Naive thymus-derived CD4-positive, alpha-beta T cell (primary cell): ENCODE measurements at regions of chr12 and their contacts with region 1.

Region 1: DNA sequence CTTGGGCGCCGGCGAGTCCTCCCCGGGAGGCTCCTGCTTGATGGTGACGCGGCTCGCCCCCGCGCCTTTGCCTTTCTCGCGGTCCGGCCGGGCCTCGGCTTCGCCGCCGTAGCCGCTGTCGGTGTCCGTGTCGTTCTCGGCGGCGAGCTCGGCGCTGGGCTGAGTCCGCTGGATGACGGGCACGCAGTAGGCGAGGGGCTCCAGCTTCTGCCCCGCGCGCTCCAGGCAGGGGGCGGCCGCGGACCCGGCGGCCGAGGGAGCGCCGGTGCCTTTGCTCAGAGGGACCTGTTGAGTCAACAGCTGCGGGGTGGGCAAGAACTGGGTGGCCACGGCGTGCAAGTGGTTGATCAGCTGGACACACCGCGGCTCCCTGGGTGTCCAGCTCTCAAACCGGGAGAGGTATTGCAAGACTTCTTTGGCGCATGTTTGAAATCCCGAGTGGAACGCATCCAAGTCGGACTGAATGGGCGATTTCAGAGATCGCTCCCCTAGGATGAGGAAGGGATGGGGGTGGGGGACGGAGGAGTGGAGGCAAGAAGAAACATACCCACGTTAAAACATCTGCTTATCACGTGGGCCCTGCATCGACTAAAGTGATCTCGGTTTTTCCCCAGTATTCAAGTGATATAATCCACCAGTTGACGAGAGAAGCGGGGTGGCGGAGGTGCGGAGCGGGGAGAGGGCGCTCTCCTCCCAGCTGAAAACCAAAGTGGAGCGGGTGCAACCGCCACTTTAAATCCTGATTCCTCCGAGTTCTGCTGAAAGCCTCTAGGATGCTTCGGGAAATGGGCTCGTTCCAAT is 2.0 kb downstream of the BHLHE41 start:
- DNase-seq: peak in 7 of 9 donors; percentile 16 to 51 (median 22)
- ATAC-seq: peak; percentile 44
- H3K4me3 ChIP-seq: peak overlapping the region; percentile 39
- H3K4me3 Mint-ChIP-seq: peak overlapping the region; percentile 80 to 91 (median 88)
- H3K27ac ChIP-seq: no peak overlapping the region
- H3K27ac Mint-ChIP-seq: peak overlapping the region in 3 of 9 donors; percentile 46 to 75 (median 58)
- H3K4me1 ChIP-seq: peaks cover 12 to 21% of the 10 kb centered on the region in 2 donors
- H3K4me1 Mint-ChIP-seq: peaks cover 22 to 49% (median 41%) of the 10 kb centered on the region in 7 donors
- H3K27me3 ChIP-seq: peaks cover 23 to 42% of the 10 kb centered on the region in 2 donors
- H3K27me3 Mint-ChIP-seq: peaks cover 67 to 86% (median 78%) of the 10 kb centered on the region in 5 donors

Region 2: DNA sequence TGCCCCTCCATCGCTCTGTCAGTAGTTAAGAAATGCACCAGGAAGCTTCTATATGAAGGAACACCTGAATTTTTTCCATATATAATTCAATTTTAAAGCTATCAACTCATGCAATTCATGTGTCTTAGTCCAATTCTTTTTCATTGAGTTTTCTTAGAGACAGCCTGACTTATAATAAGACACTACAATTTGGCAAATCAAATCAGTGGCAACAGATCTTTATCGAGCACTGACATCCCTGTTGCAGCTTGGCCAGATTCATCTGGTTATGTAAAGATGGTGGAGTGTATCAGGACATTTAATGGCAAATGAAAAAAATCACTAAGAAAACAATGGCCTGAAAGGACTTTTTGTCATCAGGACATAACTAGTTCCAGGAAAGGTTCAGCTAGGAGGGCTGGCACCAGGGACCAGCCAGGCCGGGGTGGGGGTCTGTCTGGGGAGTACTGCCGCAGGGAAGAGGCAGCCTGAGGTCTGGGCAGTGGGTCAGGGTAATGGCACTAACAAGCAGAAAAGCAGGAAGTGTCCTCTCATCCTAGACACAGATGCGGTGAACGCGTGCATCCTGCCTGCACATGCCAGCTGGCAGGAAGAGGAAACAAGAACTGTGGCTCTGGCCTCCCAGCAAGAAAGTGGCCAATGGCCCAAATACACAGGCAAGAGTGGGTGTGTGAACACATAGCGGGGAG is 469.2 kb before region 1 on chr12:
- CTCF ChIA-PET with region 1: no interaction called
- POLR2A ChIA-PET with region 1: no interaction called
- intact Hi-C with region 1: no loop called
- DNase-seq: no peak
- ATAC-seq: peak; percentile 40
- H3K4me3 ChIP-seq: no peak overlapping the region
- H3K4me3 Mint-ChIP-seq: peak overlapping the region in 1 of 10 donors; percentile 59
- H3K27ac ChIP-seq: no peak overlapping the region
- H3K27ac Mint-ChIP-seq: peak overlapping the region in 1 of 9 donors; percentile 47
- H3K4me1 ChIP-seq: no peaks in the 10 kb centered on the region
- H3K4me1 Mint-ChIP-seq: peaks cover 0 to 11% (median 8%) of the 10 kb centered on the region in 7 donors
- H3K27me3 ChIP-seq: no peaks in the 10 kb centered on the region
- H3K27me3 Mint-ChIP-seq: peaks cover 0 to 5% (median 0%) of the 10 kb centered on the region in 5 donors

Region 3: DNA sequence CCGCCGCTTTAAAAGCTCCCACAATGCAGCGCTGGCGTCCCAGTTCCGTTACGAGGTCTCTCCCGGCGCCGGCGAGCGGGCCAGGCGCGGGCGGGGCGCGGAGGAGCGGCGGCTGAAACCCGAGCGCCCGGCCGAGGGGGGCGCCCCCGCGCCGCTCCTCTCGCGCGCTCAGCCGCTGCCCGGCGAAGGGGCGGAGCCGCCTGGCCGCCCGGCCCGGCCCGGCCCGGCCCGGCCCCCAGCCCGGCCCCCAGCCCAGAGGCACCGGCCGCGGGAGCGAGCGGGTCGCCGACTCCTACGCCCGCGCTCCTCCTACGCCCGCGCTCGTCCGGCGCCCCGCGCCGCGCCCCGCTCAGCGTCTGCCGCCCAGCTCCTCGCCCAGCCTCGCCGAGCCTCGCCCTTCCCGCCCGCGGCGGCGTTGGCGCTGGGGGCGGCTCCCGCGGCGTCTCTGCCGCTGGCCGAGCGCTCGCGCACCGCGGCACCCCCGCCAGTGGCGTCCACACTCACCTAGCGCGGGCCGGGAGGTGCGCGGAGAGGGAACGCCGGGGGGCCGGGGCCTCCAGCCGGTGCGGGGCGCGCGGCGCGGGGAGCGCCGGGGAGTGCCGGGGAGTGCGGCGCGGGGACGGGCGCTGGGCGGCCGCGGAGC is 164.3 kb before region 1 on chr12 and contains the start of gene RASSF8:
- CTCF ChIA-PET with region 1: no interaction called
- POLR2A ChIA-PET with region 1: no interaction called
- intact Hi-C with region 1: loop called in 1 of 2 experiments (anchors 5 kb)
- DNase-seq: peak in 4 of 9 donors; percentile 1 to 48 (median 20)
- ATAC-seq: peak; percentile 65
- H3K4me3 ChIP-seq: peak within 1 kb of the TSS; percentile 40
- H3K4me3 Mint-ChIP-seq: peak within 1 kb of the TSS; percentile 75 to 90 (median 83)
- H3K27ac ChIP-seq: no peak within 1 kb of the TSS
- H3K27ac Mint-ChIP-seq: peak within 1 kb of the TSS in 1 of 9 donors; percentile 13
- H3K4me1 ChIP-seq: peaks cover 4 to 5% of the 10 kb centered on the region in 2 donors
- H3K4me1 Mint-ChIP-seq: peaks cover 12 to 27% (median 21%) of the 10 kb centered on the region in 7 donors
- H3K27me3 ChIP-seq: peaks cover 0 to 3% of the 10 kb centered on the region in 2 donors
- H3K27me3 Mint-ChIP-seq: peaks cover 67 to 83% (median 74%) of the 10 kb centered on the region in 5 donors
- total RNA-seq, gene RASSF8: 0.10 to 0.64 (median 0.27) TPM in 3 of 5 experiments, not detected in the others

Region 4: DNA sequence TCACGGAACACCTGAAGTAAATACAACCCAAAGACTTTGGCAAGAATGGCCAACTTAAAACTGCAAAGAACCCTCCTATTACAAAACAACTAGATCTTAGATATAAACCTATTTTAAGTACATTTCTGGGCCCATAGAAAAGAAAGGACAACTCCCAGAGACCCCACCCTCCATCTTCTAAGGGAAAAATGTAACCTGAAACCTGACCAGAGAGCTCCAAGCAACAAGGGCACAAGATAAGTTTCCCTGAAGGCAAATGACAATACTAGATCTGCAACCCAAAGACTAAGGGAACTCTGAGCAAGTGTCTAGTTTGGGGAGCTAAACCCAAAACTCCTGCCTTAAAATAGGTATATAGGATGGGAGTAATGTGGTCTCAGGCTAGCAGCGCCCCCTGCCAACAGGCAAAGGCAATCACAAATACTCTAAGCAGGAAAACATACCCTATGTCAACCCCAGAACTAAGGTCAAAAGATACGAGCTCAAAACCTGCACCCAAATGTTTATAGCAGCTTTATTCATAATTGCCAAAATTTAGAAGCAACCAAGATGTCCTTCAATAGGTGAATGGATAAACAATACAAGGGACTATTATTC is 491.2 kb after region 1 on chr12:
- CTCF ChIA-PET with region 1: no interaction called
- POLR2A ChIA-PET with region 1: no interaction called
- intact Hi-C with region 1: loop called in 1 of 2 experiments (anchors 1 kb)
- DNase-seq: peak in 1 of 9 donors; percentile 3
- ATAC-seq: no peak
- H3K4me3 ChIP-seq: no peak overlapping the region
- H3K4me3 Mint-ChIP-seq: no peak overlapping the region
- H3K27ac ChIP-seq: no peak overlapping the region
- H3K27ac Mint-ChIP-seq: no peak overlapping the region
- H3K4me1 ChIP-seq: no peaks in the 10 kb centered on the region
- H3K4me1 Mint-ChIP-seq: peaks cover 0 to 2% (median 0%) of the 10 kb centered on the region in 7 donors
- H3K27me3 ChIP-seq: no peaks in the 10 kb centered on the region
- H3K27me3 Mint-ChIP-seq: no peaks in the 10 kb centered on the region

Region 5: GRCh38 chr12:26651566-26652188 is 528.8 kb after region 1 on chr12:
- CTCF ChIA-PET with region 1: no interaction called
- POLR2A ChIA-PET with region 1: no interaction called
- intact Hi-C with region 1: loop called in 1 of 2 experiments (anchors 2 kb)
- DNase-seq: peak in 2 of 9 donors; percentile 27 to 36
- ATAC-seq: peak; percentile 50
- H3K4me3 ChIP-seq: no peak overlapping the region
- H3K4me3 Mint-ChIP-seq: no peak overlapping the region
- H3K27ac ChIP-seq: no peak overlapping the region
- H3K27ac Mint-ChIP-seq: no peak overlapping the region
- H3K4me1 ChIP-seq: no peaks in the 10 kb centered on the region
- H3K4me1 Mint-ChIP-seq: peaks cover 0 to 4% (median 0%) of the 10 kb centered on the region in 7 donors
- H3K27me3 ChIP-seq: no peaks in the 10 kb centered on the region
- H3K27me3 Mint-ChIP-seq: no peaks in the 10 kb centered on the region

Region 6: DNA sequence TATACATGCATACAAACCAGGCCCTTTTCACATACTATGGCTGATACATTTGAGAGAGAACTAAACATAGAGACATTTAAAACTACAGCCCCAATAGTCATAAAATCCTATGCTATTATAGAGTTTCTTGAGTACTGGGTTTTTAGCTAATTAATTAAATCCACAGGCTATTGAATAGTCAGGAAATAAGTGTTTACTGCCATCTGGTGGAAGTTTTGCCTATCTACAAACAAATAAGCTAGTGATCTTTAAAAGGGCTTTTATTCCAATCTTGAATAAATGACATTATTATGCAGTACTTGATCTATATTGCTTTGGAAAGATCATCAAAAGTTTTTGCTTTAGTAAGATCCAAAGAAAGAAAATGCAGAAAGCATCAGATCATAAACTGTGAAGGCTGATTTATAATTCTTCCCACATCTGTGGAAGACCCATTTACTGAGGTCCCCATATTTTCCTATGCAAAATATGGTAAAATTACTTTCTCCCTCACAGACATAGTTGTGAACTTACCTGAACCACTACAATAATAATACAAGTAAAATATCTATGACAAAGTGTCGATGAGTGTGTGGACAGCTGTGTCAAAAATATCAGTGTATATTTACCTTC is 578.8 kb after region 1 on chr12:
- CTCF ChIA-PET with region 1: interaction called, 3 read pairs
- POLR2A ChIA-PET with region 1: no interaction called
- intact Hi-C with region 1: loop called (anchors 1 to 5 kb)
- DNase-seq: peak in 5 of 9 donors; percentile 7 to 34 (median 20)
- ATAC-seq: no peak
- H3K4me3 ChIP-seq: no peak overlapping the region
- H3K4me3 Mint-ChIP-seq: no peak overlapping the region
- H3K27ac ChIP-seq: no peak overlapping the region
- H3K27ac Mint-ChIP-seq: no peak overlapping the region
- H3K4me1 ChIP-seq: no peaks in the 10 kb centered on the region
- H3K4me1 Mint-ChIP-seq: peaks cover 0 to 2% (median 0%) of the 10 kb centered on the region in 7 donors
- H3K27me3 ChIP-seq: no peaks in the 10 kb centered on the region
- H3K27me3 Mint-ChIP-seq: no peaks in the 10 kb centered on the region

Region 7: GRCh38 chr12:27237790-27238771 is 1115.2 kb after region 1 on chr12:
- CTCF ChIA-PET with region 1: no interaction called
- POLR2A ChIA-PET with region 1: no interaction called
- intact Hi-C with region 1: loop called in 1 of 2 experiments (anchors 5 kb)
- DNase-seq: peak in 7 of 9 donors; percentile 6 to 31 (median 25)
- ATAC-seq: peak; percentile 86
- H3K4me3 ChIP-seq: no peak overlapping the region
- H3K4me3 Mint-ChIP-seq: peak overlapping the region in 9 of 10 donors; percentile 39 to 73 (median 48)
- H3K27ac ChIP-seq: peak overlapping the region; percentile 42
- H3K27ac Mint-ChIP-seq: peak overlapping the region; percentile 60 to 93 (median 87)
- H3K4me1 ChIP-seq: peaks cover 0 to 14% of the 10 kb centered on the region in 2 donors
- H3K4me1 Mint-ChIP-seq: peaks cover 12 to 34% (median 32%) of the 10 kb centered on the region in 7 donors
- H3K27me3 ChIP-seq: no peaks in the 10 kb centered on the region
- H3K27me3 Mint-ChIP-seq: peaks cover 0 to 5% (median 0%) of the 10 kb centered on the region in 5 donors

Region 8: GRCh38 chr12:27710592-27711316 is 1587.9 kb after region 1 on chr12 and contains the start of gene MRPS35:
- CTCF ChIA-PET with region 1: no interaction called
- POLR2A ChIA-PET with region 1: no interaction called
- intact Hi-C with region 1: loop called in 1 of 2 experiments (anchors 5 kb)
- DNase-seq: peak; percentile 86 to 94 (median 92)
- ATAC-seq: peak; percentile 100
- H3K4me3 ChIP-seq: peak within 1 kb of the TSS; percentile 98
- H3K4me3 Mint-ChIP-seq: peak within 1 kb of the TSS; percentile 94 to 100 (median 98)
- H3K27ac ChIP-seq: peak within 1 kb of the TSS; percentile 85
- H3K27ac Mint-ChIP-seq: peak within 1 kb of the TSS; percentile 91 to 100 (median 98)
- H3K4me1 ChIP-seq: peaks cover 7 to 13% of the 10 kb centered on the region in 2 donors
- H3K4me1 Mint-ChIP-seq: peaks cover 21 to 46% (median 39%) of the 10 kb centered on the region in 7 donors
- H3K27me3 ChIP-seq: no peaks in the 10 kb centered on the region
- H3K27me3 Mint-ChIP-seq: peaks cover 0 to 18% (median 0%) of the 10 kb centered on the region in 5 donors
- total RNA-seq, gene MRPS35: 19.9 to 35.7 (median 23.5) TPM